ENCODE measurements at regions of chr11 and their contacts with region 1.

Region 1: GRCh38 chr11:910589-911195 is at the start of gene CHID1:
- DNase-seq: peak; percentile 83 to 86
- H3K4me3 ChIP-seq: peak within 1 kb of the TSS; percentile 86 to 98 (median 89)
- H3K27ac ChIP-seq: peak within 1 kb of the TSS; percentile 87 to 92
- H3K4me1 ChIP-seq: peaks cover 11% of the 10 kb centered on the region in 2 donors
- H3K27me3 ChIP-seq: no peaks in the 10 kb centered on the region
- CTCF ChIP-seq: no peak
- POLR2A ChIP-seq: peak; percentile 19
- total RNA-seq, gene CHID1: 58.3 to 79.5 (median 68.3) TPM

Region 2: DNA sequence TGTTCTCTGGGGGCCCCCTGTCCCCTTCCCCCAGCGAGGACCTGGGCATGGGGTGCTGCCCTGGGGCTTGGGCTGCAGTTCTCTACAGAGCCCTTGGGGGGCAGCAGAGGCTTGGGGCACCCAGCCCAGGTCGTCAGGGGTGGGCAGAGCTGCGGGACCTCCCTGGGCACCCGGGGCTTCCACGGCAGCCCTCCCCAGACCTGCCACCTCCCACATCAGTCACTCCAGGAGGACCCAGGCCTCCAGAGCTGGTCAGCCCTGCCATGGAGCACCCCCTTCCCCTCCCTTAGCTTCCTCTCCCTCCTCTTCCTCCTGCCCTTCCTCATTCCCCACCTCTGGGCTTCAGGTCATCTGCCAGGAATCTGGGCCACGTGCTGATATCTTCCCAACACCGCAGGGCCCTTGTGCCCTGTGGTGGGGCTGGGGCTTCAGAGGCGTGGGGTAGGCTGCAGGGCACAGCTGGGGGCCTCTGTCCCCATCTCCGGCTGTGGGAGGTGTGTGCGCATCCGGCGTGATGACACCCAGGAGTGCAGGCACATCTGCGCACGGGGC is 62.2 kb before region 1 on chr11:
- intact Hi-C with region 1: loop called (anchors 5 kb)
- DNase-seq: no peak
- H3K4me3 ChIP-seq: peak overlapping the region in 2 of 3 donors; percentile 57 to 78
- H3K27ac ChIP-seq: no peak overlapping the region
- H3K4me1 ChIP-seq: peaks cover 19 to 26% of the 10 kb centered on the region in 2 donors
- H3K27me3 ChIP-seq: no peaks in the 10 kb centered on the region
- CTCF ChIP-seq: peak; percentile 25 to 81 (median 75)
- POLR2A ChIP-seq: no peak

Measured in breast epithelium (tissue), 4 donors.